AG04450 (cell line): ENCODE measurements at regions of chr14 and their contacts with region 1.

Region 1: DNA sequence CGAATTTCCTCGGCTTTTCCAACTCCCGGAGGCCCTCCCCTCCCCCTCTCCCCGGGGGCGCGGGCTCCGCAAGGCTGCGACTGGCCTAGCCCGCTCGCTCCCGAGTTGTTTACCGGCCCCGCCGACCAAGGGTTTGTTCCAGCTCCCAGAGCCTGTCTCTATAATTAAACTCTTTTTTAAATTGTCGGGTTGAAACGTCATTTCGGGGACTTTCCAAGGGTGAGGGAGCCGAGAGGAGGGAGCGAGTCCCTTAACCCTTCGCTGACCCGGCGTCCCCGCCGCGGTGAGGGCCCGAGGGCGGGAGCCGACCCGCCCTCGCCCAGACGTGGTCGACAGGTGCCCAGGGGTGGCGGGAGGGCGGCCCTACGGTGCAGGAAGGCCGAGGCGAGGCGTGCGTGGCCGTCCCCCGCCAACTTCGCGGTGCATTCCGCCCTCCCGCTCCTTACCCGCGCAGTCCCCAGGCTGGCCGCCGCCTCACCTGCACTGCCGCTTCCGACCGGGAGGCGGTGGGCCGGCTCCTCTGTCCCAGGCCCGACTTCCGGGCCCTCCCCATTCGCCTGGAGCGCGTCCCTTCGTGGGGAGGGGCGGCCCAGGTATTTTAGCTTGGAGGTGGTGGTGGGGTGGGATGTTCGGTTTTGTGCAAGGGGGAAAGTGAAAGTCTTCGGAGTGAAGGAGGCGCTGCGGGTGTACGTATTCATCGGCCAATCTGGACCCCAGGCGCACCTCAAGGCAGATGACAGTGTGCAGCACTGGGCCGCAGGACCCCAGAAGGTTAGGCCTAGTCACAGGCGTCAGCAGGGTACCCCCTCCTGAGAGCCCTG is 2.9 kb upstream of the ZFP36L1 start:
- DNase-seq: no peak
- H3K4me3 ChIP-seq: peak overlapping the region; percentile 100
- H3K27ac ChIP-seq: peak overlapping the region; percentile 100
- H3K27me3 ChIP-seq: no peaks in the 10 kb centered on the region
- CTCF ChIP-seq: peak; percentile 67

Region 2: GRCh38 chr14:68248481-68249255 is 547.1 kb before region 1 on chr14:
- CTCF ChIA-PET with region 1: interaction called, 6 read pairs
- POLR2A ChIA-PET with region 1: interaction called, 13 read pairs
- DNase-seq: no peak
- H3K4me3 ChIP-seq: no peak overlapping the region
- H3K27ac ChIP-seq: peak overlapping the region; percentile 33
- H3K27me3 ChIP-seq: no peaks in the 10 kb centered on the region
- CTCF ChIP-seq: peak; percentile 60

Region 3: DNA sequence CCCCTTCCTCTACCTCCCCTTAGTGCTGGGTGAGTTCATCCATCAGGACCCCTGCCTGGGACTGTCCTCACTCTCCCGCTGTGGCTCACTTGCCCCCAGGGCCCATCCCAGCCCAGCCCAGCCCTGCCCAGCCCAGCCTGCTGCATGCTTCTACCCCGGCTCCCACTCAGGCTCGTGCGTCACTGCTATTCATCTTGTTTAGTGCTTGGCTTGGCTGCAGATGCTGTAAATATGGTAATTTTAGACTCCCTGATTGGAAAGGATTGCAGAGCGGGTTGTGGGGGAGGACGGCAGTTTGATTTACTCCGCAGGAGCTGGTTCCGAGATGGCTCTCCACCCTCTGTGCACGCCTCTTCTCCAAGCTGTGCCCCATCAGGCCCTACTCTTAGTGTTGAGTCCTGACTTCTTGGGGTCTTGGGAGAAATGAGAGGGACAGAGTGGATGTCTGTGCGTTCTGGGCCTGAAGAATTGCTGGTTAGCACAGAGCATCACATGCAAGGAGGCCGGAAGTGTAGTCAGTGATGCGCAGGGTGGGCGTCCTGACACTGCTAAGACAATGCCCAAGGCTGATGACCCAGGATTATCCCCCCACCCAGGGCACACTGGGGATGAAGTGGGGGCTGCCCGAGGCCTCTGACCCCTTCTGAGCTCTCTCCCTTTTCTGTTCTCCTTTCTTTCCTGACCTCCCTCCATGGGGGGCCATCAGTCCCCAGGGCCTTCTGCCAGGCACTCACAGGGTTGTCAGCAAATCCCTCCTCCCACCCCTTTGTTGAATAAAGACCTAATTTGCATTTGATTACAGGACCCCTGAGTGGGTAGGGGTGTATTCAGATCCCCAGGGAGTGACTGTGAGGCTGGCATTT is 247.4 kb before region 1 on chr14:
- CTCF ChIA-PET with region 1: no interaction called
- POLR2A ChIA-PET with region 1: interaction called, 20 read pairs
- DNase-seq: peak; percentile 96
- H3K4me3 ChIP-seq: no peak overlapping the region
- H3K27ac ChIP-seq: peak overlapping the region; percentile 100
- H3K27me3 ChIP-seq: no peaks in the 10 kb centered on the region
- CTCF ChIP-seq: no peak

Region 4: DNA sequence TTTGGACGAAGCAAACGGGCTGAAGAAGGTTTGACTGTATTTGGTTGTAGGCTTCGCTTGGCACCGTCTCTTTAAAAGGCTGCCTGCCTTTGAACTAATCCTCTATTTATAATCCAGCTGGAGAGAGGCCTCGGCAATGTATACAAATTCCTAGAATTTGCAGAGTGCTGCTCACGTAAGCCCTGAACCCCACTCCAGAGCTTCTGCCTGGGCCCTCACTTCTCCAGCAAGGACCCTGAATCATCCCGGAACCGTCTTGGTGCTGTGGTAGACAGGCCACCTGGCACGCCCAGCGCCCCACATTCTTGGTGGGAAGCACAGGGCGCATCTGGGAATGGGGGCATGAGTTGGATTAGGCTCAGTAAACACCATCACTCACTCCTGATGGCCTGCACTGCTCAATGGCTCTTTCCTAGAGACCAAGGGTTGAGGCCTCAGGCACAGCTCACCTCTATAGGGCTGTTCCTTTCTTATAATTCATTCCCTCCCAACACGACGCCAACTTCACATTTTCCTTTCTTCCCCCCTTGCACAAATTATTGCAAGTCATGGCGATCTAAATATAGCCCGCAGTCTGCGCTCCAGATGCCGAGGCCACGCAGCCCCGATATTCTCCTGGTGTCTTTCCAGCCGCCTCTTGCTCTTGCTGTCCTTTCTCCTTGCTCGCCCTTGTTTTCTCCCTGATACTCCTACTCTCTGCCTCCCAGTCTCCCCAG is 144.0 kb before region 1 on chr14:
- CTCF ChIA-PET with region 1: no interaction called
- POLR2A ChIA-PET with region 1: interaction called, 11 read pairs
- DNase-seq: peak; percentile 92
- H3K4me3 ChIP-seq: no peak overlapping the region
- H3K27ac ChIP-seq: peak overlapping the region; percentile 96
- H3K27me3 ChIP-seq: no peaks in the 10 kb centered on the region
- CTCF ChIP-seq: no peak

Region 5: DNA sequence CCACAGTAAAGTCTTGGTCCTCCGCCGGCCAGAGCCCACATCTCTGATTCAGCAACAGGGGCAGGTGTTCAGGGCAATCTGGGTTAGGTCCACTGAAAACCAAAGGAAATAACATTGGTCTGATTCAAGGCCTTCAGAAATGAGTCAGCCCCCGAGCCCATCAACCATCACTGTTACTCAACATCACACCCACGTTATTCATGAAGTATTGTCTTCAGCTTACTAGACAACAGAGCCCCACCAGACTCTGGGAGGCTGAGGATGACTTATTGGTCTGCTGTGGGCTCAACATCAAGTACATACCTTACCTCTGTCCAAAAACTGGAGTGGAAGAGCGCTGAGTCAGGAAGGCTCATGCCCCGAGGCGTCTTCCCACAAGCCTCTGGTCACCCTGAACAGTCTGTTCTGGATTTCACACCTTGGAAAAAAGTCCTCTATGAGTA is 100.5 kb before region 1 on chr14:
- CTCF ChIA-PET with region 1: no interaction called
- POLR2A ChIA-PET with region 1: interaction called, 15 read pairs
- DNase-seq: peak; percentile 98
- H3K4me3 ChIP-seq: no peak overlapping the region
- H3K27ac ChIP-seq: peak overlapping the region; percentile 92
- H3K27me3 ChIP-seq: no peaks in the 10 kb centered on the region
- CTCF ChIP-seq: no peak

Region 6: GRCh38 chr14:68807148-68807600 is 11.4 kb after region 1 on chr14:
- CTCF ChIA-PET with region 1: interaction called, 3 read pairs
- POLR2A ChIA-PET with region 1: interaction called, 55 read pairs
- DNase-seq: peak; percentile 95
- H3K4me3 ChIP-seq: no peak overlapping the region
- H3K27ac ChIP-seq: peak overlapping the region; percentile 97
- H3K27me3 ChIP-seq: no peaks in the 10 kb centered on the region
- CTCF ChIP-seq: no peak

Region 7: GRCh38 chr14:68824517-68825347 is 28.9 kb after region 1 on chr14:
- CTCF ChIA-PET with region 1: interaction called, 3 read pairs
- POLR2A ChIA-PET with region 1: interaction called, 10 read pairs
- DNase-seq: no peak
- H3K4me3 ChIP-seq: no peak overlapping the region
- H3K27ac ChIP-seq: no peak overlapping the region
- H3K27me3 ChIP-seq: no peaks in the 10 kb centered on the region
- CTCF ChIP-seq: peak; percentile 90